Endothelial cell of umbilical vein (primary cell): ENCODE measurements at regions of chr3 and their contacts with region 1.

Region 1: DNA sequence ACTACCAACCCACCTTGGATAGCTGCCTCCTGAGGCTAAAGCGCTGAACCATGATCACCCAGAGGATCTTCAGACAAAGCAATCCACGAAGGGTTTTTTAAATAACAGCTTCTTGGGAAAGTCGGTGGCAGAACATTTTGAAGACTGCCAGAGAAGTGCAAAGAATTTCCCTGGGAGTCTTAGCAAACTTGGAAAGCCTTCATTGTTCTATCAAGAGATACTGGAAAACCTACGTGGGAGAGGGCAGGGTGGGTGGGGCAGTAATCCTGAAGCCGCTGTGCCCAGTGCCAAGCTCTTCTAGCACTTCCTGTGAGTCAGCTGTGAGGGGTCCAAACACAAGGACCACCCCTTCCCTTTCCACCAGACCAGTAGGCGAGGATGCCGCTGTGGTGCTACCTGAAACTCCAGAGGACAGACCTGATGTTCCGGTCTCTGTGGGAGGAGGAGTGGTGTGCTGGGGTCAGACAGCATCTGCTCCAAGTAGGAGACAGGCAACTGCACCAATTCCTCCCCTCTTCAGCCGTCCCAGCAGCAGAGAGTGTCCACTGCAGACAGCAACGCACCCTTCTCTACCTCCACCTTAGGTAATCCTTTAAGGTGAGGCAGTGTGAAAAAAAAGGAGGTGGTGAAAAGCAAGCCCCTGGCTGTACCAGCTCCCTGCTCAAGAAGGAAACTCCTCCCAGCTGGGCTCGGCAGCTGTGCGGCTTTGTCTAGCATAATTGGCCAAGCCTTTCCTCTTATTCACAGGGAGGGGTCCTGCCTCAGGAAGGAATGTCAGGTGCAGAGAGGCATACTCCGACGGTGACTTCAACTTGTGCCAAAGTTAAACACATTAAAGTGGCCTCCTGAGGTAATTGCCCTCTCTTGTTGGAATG is 99.0 kb downstream of the TMCC1 start:
- DNase-seq: peak; percentile 67
- H3K4me3 ChIP-seq: peak overlapping the region; percentile 19 to 85 (median 62)
- H3K27ac ChIP-seq: peak overlapping the region; percentile 82
- H3K4me1 ChIP-seq: peaks cover 32% of the 10 kb centered on the region
- H3K27me3 ChIP-seq: no peaks in the 10 kb centered on the region
- CTCF ChIP-seq: no peak
- POLR2A ChIP-seq: no peak

Region 2: GRCh38 chr3:129777806-129778205 is 16.7 kb before region 1 on chr3:
- CTCF ChIA-PET with region 1: interaction called, 3 read pairs
- POLR2A ChIA-PET with region 1: no interaction called
- dilution Hi-C with region 1: no loop called
- intact Hi-C with region 1: loop called (anchors 2 kb)
- DNase-seq: peak; percentile 14
- H3K4me3 ChIP-seq: no peak overlapping the region
- H3K27ac ChIP-seq: no peak overlapping the region
- H3K4me1 ChIP-seq: no peaks in the 10 kb centered on the region
- H3K27me3 ChIP-seq: no peaks in the 10 kb centered on the region
- CTCF ChIP-seq: no peak
- POLR2A ChIP-seq: no peak

Region 3: GRCh38 chr3:129809297-129809696 is 14.7 kb after region 1 on chr3:
- CTCF ChIA-PET with region 1: interaction called, 10 read pairs
- POLR2A ChIA-PET with region 1: interaction called, 4 read pairs
- dilution Hi-C with region 1: no loop called
- intact Hi-C with region 1: no loop called
- DNase-seq: peak; percentile 49
- H3K4me3 ChIP-seq: no peak overlapping the region
- H3K27ac ChIP-seq: no peak overlapping the region
- H3K4me1 ChIP-seq: peaks cover 7% of the 10 kb centered on the region
- H3K27me3 ChIP-seq: no peaks in the 10 kb centered on the region
- CTCF ChIP-seq: no peak
- POLR2A ChIP-seq: no peak